Heart left ventricle (tissue), 16 donors: ENCODE measurements at regions of chr9 and their contacts with region 1.

Region 1: DNA sequence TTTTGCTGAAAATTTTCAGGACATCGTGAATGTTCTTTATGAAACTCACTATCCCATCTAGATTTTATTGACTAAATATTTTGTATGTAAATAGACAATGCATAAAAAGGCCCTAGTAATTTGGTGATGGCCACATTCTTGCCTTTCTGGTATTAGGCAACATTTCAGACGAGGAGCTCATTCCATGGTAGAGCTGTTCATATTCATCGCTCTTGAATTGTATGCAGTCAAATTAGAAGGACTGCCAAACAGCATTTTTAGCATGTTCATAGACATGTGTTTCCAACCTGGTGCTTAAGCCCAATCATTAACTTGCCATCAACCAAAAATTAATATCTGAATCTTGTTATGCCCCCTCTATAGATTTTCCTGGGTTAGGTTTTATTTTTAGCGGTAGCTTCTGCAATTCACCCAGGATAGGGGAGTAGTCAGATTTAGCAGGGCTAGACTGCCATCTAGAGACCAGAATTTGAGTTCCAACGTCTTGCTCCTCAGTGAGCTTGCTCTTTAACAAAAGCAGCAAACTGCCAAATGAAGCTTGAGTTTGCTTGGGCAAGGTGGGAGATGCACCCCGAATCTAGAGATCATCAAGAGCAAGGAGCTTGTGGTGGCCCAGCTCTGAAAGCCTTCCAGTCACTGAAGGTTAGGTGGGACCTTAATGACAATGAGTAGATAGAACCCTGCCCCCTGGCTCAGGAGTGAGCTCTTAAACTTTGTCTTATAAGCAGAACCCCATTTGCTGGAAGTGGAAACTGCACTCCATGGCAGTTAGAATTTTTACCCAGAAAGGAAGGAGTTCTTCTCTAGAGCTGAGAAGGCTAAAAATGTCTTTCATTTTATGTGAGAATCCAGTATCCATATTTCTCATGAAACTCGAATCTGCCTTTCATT is 456.2 kb downstream of the RASEF start:
- DNase-seq: peak in 3 of 5 donors; percentile 15 to 43 (median 40)
- ATAC-seq: peak in 3 of 4 donors; percentile 68 to 87 (median 79)
- H3K4me3 ChIP-seq: no peak overlapping the region
- H3K27ac ChIP-seq: no peak overlapping the region
- H3K4me1 ChIP-seq: peaks cover 0 to 25% (median 5%) of the 10 kb centered on the region in 12 donors
- H3K27me3 ChIP-seq: peaks cover 0 to 10% (median 0%) of the 10 kb centered on the region in 9 donors
- CTCF ChIP-seq: peak; percentile 48 to 80 (median 70)
- POLR2A ChIP-seq: no peak

Region 2: GRCh38 chr9:81521892-81522291 is 1084.8 kb before region 1 on chr9:
- intact Hi-C with region 1: loop called in 5 of 10 experiments (anchors 2 to 10 kb)
- DNase-seq: no peak
- ATAC-seq: no peak
- H3K4me3 ChIP-seq: no peak overlapping the region
- H3K27ac ChIP-seq: no peak overlapping the region
- H3K4me1 ChIP-seq: peaks cover 0 to 7% (median 0%) of the 10 kb centered on the region in 12 donors
- H3K27me3 ChIP-seq: no peaks in the 10 kb centered on the region
- CTCF ChIP-seq: no peak
- POLR2A ChIP-seq: no peak

Region 3: DNA sequence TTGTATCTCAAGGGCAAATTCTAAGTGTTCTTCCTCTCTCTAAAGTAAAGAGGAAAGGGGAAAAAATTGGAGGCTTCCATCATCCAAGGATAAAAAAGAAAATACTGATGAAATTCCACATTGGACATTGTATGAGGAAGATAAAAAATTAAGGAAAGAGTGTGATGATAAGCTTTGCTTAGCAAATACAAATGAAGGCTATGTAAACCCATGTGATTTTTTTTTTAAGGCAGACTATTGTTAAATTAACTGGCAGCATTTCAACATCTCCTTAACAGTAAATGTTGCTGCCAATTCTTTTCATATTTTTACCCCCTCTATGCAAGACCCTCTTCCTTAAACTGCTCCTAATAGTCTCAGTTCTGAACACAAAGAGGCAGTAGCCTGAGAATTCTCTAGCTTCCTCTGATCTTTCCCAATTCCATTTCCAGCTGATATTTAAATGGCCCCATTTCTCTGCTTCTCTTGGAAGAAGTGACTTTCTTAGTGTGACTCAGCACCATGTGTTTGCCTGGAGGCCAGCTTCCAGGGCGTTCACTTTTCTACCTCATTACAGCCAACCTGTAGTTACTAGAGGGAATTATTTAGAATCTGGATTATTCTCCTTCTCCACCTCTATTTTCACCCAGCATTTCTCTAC is 1077.1 kb before region 1 on chr9:
- intact Hi-C with region 1: loop called in 4 of 10 experiments (anchors 10 kb)
- DNase-seq: no peak
- ATAC-seq: peak in 3 of 4 donors; percentile 72 to 81 (median 80)
- H3K4me3 ChIP-seq: no peak overlapping the region
- H3K27ac ChIP-seq: no peak overlapping the region
- H3K4me1 ChIP-seq: peaks cover 0 to 17% (median 0%) of the 10 kb centered on the region in 12 donors
- H3K27me3 ChIP-seq: no peaks in the 10 kb centered on the region
- CTCF ChIP-seq: no peak
- POLR2A ChIP-seq: no peak

Region 4: DNA sequence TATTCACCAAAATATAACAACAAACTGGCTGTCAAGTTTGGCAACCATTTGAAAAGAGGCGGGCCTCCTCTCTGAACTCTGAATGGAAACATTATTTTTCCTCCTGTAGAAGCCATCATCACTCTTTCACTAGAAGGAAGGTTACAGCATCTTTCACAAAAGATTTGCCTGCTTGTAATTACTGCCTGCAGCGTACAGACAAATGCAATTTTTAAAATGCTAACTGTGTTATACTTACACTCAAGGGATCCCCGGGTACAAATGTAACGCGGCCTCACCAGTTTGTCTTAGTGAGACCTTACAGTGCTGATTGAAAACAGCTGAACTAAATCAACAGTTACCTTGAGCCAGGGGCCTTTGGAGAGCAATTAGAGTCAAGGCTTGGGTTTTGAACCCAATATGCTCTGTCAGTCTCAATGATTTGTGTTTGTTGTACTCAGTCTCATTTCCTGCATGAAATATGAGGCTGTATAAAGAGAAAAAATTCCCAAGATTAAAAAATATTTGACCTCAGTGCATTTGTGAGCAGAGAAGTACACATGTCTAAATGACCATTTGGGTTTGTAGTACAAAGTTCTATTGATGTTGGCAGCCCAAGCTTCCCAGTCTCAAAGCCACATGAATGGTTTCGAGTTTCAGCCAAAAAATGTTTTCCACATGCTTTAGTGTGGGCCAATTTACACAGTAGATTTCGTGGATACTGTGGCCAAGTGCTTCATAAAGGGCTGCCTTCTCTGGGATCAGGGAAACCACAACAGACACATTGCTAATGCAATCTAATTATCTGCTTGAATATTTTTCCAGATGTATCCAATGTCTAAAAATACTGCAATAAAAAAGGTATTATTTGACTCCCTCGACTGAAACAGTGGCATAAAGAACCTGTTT is 118.2 kb before region 1 on chr9:
- intact Hi-C with region 1: loop called in 1 of 10 experiments (anchors 10 kb)
- DNase-seq: peak in 3 of 5 donors; percentile 41 to 57 (median 55)
- ATAC-seq: peak; percentile 79 to 92 (median 86)
- H3K4me3 ChIP-seq: peak overlapping the region in 1 of 12 donors; percentile 1
- H3K27ac ChIP-seq: peak overlapping the region; percentile 64 to 86 (median 76)
- H3K4me1 ChIP-seq: peaks cover 0 to 31% (median 16%) of the 10 kb centered on the region in 12 donors
- H3K27me3 ChIP-seq: no peaks in the 10 kb centered on the region
- CTCF ChIP-seq: no peak
- POLR2A ChIP-seq: no peak

Region 5: DNA sequence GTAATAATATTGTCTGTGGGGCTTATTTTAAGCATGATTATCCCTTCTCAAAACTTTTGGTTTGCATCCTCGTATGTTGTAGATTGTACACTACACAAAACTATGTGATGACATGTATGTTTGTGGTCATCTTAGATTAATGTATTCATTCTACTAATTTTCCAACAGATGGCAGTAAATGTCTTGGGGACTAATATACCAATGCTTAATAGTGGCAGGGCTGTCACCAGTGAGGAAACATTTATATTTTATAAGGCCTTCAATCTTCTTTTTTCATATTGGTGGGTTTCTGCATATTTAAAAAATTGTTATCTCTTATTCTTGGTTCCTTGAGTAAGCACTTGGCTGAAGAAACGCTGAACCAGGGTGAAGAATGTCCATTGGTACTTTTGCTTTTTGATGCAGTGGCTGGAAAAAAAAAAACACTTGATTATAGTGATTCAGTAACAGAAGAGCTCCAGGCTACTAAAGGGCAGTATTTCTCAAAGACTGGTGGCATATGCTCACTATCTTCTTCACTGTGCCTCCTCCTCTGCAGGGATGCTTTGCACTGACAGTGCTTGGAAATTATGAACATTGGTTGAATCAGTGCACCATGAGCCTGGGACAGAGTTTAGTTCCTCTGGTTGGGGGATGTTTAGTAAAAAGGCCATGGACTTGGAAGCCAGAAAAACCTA is 74.1 kb before region 1 on chr9:
- intact Hi-C with region 1: loop called (anchors 1 to 5 kb)
- DNase-seq: no peak
- ATAC-seq: no peak
- H3K4me3 ChIP-seq: no peak overlapping the region
- H3K27ac ChIP-seq: no peak overlapping the region
- H3K4me1 ChIP-seq: peaks cover 0 to 6% (median 0%) of the 10 kb centered on the region in 12 donors
- H3K27me3 ChIP-seq: no peaks in the 10 kb centered on the region
- CTCF ChIP-seq: peak in 11 of 12 donors; percentile 17 to 65 (median 46)
- POLR2A ChIP-seq: no peak

Region 6: GRCh38 chr9:82539856-82540579 is 66.7 kb before region 1 on chr9:
- intact Hi-C with region 1: loop called in 2 of 10 experiments (anchors 2 to 5 kb)
- DNase-seq: no peak
- ATAC-seq: no peak
- H3K4me3 ChIP-seq: no peak overlapping the region
- H3K27ac ChIP-seq: no peak overlapping the region
- H3K4me1 ChIP-seq: peaks cover 0 to 10% (median 0%) of the 10 kb centered on the region in 12 donors
- H3K27me3 ChIP-seq: no peaks in the 10 kb centered on the region
- CTCF ChIP-seq: no peak
- POLR2A ChIP-seq: no peak